GM13977 (cell line): ENCODE measurements at regions of chr1 and their contacts with region 1.

Region 1: GRCh38 chr1:19390901-19391595 is 78.9 kb downstream of the SLC66A1 start:
- DNase-seq: peak; percentile 81
- CTCF ChIP-seq: peak; percentile 84

Region 2: DNA sequence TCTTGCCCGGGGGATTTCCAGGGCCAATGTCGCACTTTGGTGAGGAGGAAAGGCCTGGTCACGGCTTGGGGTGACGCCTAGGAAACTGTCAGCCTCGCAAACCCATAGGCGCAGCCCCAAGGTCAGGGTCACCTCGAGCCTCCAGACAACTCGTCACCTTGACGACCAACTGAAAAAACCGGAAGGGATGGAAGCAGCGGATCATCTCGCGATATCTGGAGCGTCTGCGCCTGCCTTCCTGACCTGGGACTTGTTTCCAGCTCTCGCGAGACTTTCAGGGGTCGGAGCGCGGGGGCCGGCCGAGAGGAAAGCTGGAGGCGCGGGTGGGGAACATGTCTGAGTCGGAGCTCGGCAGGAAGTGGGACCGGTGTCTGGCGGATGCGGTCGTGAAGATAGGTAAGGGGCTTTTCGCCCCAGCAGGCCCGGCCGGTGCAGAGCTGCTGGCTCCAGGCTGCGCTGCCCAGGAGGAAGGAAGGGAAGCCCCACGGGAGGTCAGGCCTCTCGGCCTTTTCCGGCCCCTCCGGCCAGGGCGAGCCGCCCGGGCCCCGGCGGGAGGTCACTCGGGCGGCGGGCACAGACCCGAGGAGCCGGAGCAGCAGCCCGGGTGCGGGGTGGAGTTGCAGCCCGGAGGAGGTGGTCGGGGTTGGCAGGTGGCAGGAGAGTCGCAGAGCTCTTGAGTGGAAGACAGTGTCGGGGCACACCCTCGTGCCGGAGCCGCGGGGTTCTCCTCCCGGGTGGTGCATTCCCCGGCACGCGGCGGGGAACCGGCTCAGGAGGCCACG is 205.9 kb after region 1 on chr1:
- in situ Hi-C with region 1: loop called (anchors 25 kb)
- DNase-seq: peak; percentile 95
- CTCF ChIP-seq: no peak